Activated CD4-positive, alpha-beta T cell treated with anti-CD3 and anti-CD28 coated beads, Interleukin-2, amount 10 ng/mL, durations not matched to agents 24 days and 14 days (primary cell): ENCODE measurements at regions of chr5 and their contacts with region 1.

Region 1: DNA sequence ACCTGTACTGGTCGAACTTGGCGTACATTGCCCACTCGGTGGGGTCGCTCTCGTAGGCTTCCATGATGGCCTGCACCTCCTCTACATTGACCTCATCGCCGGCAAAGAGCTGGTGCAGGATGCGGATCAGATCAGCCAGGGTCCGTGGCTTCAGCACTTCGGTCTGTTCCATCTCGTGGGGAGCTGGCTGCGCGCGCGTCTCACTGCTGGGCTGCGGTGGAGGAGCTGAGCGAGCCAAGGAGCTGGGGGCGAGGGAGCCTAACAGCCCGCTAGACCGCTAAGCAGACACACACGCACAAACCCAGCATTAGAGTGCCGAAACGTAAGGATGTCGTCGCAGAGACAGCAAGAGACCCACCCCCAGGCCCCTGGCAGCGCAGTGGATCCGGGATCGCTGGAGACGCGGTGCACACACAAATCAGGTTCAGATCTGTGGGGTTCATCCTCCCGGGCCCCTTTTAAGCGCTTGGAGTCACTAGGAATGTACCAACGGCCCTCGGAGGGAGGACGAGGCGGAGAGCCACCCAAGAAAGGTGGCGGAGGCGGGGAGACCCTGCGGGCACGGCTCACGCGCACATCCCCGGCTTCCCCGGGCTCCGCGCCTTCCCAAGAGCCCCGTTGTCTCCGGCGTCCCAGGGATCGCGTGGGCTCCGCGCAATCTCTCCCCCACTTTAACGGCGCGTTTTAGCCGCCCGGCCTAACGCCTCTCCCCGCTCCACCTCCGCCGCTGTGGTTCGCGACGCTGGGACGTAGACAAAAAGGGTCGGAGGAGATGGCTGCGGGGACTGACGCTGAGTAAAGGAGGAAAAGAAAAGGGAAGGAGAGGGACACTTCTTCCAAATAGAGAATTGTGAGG is at the start of gene CDO1:
- DNase-seq: peak; percentile 77
- H3K4me3 Mint-ChIP-seq: peak within 1 kb of the TSS; percentile 78
- H3K27ac Mint-ChIP-seq: no peak within 1 kb of the TSS
- H3K4me1 Mint-ChIP-seq: peaks cover 22% of the 10 kb centered on the region
- H3K27me3 Mint-ChIP-seq: peaks cover 75% of the 10 kb centered on the region
- total RNA-seq, gene CDO1: 0.45 and 0.82 TPM in 2 replicates

Region 2: GRCh38 chr5:115767424-115767823 is 49.0 kb before region 1 on chr5:
- intact Hi-C with region 1: no loop called
- DNase-seq: no peak
- H3K4me3 Mint-ChIP-seq: no peak overlapping the region
- H3K27ac Mint-ChIP-seq: no peak overlapping the region
- H3K4me1 Mint-ChIP-seq: no peaks in the 10 kb centered on the region
- H3K27me3 Mint-ChIP-seq: peaks cover 16% of the 10 kb centered on the region

Region 3: DNA sequence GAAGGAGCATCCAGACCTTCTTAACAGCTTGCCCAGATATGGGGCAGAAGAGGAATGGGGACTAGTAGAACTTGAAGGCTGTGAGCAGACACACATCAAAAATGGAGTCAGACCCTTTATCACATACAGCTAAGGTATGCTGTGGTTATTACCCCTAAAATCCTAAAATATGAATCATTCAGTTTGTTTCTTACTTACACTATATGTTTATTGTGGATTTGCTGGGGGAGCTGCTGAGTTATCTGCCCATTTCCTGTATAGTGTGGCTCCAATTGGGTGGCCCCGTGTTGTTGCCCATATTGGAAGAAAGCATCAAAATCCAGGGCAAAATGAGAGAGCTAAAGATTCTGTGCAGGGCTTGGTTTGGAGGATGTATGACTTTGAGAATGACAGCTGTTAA is 82.2 kb after region 1 on chr5:
- intact Hi-C with region 1: no loop called
- DNase-seq: no peak
- H3K4me3 Mint-ChIP-seq: no peak overlapping the region
- H3K27ac Mint-ChIP-seq: no peak overlapping the region
- H3K4me1 Mint-ChIP-seq: no peaks in the 10 kb centered on the region
- H3K27me3 Mint-ChIP-seq: no peaks in the 10 kb centered on the region

Region 4: DNA sequence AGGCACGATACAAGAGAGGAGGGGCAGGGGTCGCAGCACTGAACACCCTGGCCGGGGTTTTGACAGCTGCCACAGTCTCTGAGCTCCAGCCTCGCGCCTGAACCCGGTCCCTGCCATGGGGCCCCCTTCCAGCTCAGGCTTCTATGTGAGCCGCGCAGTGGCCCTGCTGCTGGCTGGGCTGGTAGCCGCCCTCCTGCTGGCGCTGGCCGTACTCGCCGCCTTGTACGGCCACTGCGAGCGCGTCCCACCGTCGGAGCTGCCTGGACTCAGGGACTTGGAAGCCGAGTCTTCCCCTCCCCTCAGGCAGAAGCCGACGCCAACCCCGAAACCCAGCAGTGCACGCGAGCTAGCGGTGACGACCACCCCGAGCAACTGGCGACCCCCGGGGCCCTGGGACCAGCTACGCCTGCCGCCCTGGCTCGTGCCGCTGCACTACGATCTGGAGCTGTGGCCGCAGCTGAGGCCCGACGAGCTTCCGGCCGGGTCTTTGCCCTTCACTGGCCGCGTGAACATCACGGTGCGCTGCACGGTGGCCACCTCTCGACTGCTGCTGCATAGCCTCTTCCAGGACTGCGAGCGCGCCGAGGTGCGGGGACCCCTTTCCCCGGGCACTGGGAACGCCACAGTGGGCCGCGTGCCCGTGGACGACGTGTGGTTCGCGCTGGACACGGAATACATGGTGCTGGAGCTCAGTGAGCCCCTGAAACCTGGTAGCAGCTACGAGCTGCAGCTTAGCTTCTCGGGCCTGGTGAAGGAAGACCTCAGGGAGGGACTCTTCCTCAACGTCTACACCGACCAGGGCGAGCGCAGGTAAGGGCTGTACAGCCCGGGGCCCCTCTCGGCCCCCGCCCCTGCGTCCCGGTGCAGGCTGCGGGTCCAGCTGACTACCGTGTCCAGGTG is 146.3 kb after region 1 on chr5:
- intact Hi-C with region 1: loop called (anchors 2 kb)
- DNase-seq: no peak
- H3K4me3 Mint-ChIP-seq: no peak overlapping the region
- H3K27ac Mint-ChIP-seq: no peak overlapping the region
- H3K4me1 Mint-ChIP-seq: no peaks in the 10 kb centered on the region
- H3K27me3 Mint-ChIP-seq: peaks cover 63% of the 10 kb centered on the region